ENCODE measurements at regions of chrX and their contacts with region 1.

Region 1: GRCh38 chrX:154762523-154763289 is at the start of gene DKC1:
- DNase-seq: peak; percentile 81 to 97
- H3K4me3 ChIP-seq: peak within 1 kb of the TSS; percentile 57 to 74
- H3K27ac ChIP-seq: peak within 1 kb of the TSS; percentile 35 to 58
- H3K4me1 ChIP-seq: no peaks in the 10 kb centered on the region
- H3K27me3 ChIP-seq: no peaks in the 10 kb centered on the region
- CTCF ChIP-seq: peak in 1 of 3 experiments; percentile 28
- total RNA-seq, gene DKC1: 3.4 TPM

Region 2: GRCh38 chrX:154804957-154805695 is 42.4 kb after region 1 on chrX and contains the start of gene MPP1:
- intact Hi-C with region 1: loop called (anchors 1 kb)
- DNase-seq: peak in 1 of 2 donors; percentile 81
- H3K4me3 ChIP-seq: peak within 1 kb of the TSS; percentile 64 to 72
- H3K27ac ChIP-seq: peak within 1 kb of the TSS; percentile 59 to 65
- H3K4me1 ChIP-seq: no peaks in the 10 kb centered on the region
- H3K27me3 ChIP-seq: no peaks in the 10 kb centered on the region
- CTCF ChIP-seq: no peak
- total RNA-seq, gene MPP1: 65.3 TPM

Region 3: GRCh38 chrX:154819771-154820341 is 57.1 kb after region 1 on chrX:
- intact Hi-C with region 1: no loop called
- DNase-seq: no peak
- H3K4me3 ChIP-seq: no peak overlapping the region
- H3K27ac ChIP-seq: no peak overlapping the region
- H3K4me1 ChIP-seq: no peaks in the 10 kb centered on the region
- H3K27me3 ChIP-seq: no peaks in the 10 kb centered on the region
- CTCF ChIP-seq: no peak

Region 4: GRCh38 chrX:155188786-155189185 is 426.1 kb after region 1 on chrX:
- intact Hi-C with region 1: no loop called
- DNase-seq: no peak
- H3K4me3 ChIP-seq: no peak overlapping the region
- H3K27ac ChIP-seq: no peak overlapping the region
- H3K4me1 ChIP-seq: no peaks in the 10 kb centered on the region
- H3K27me3 ChIP-seq: no peaks in the 10 kb centered on the region
- CTCF ChIP-seq: no peak